BJ (cell line): ENCODE measurements at regions of chr2 and their contacts with region 1.

Region 1: DNA sequence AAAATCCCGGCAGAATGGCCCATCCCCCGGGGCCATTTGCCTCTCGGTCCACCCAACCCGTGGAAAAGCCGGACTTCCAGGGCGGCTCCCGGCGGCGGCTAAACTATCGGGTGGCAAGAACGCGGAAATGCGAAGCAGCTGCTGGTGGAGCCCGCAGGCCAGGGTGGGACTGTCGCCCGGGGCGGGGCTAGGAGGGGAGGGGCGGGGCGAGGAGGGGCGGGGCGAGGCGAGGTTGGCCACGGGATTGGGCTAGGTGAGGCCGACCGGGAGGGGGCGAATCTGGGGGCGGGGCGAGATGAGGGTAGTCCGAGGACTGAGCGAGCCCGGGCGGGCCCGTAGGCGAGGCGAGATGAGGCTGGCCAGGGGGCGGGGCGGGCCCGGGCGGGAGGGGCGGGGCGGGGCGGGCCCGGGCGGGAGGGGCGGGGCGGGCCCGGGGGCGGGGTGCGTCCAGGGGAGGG is 315 bp upstream of the SLC66A3 start:
- DNase-seq: peak; percentile 55
- H3K4me3 ChIP-seq: peak overlapping the region; percentile 27
- H3K27me3 ChIP-seq: peaks cover 4% of the 10 kb centered on the region
- CTCF ChIP-seq: no peak

Region 2: GRCh38 chr2:10931710-10932255 is 223.2 kb before region 1 on chr2:
- CTCF ChIA-PET with region 1: no interaction called
- POLR2A ChIA-PET with region 1: interaction called, 32 read pairs
- DNase-seq: no peak
- H3K4me3 ChIP-seq: no peak overlapping the region
- H3K27me3 ChIP-seq: peaks cover 6% of the 10 kb centered on the region
- CTCF ChIP-seq: no peak

Region 3: DNA sequence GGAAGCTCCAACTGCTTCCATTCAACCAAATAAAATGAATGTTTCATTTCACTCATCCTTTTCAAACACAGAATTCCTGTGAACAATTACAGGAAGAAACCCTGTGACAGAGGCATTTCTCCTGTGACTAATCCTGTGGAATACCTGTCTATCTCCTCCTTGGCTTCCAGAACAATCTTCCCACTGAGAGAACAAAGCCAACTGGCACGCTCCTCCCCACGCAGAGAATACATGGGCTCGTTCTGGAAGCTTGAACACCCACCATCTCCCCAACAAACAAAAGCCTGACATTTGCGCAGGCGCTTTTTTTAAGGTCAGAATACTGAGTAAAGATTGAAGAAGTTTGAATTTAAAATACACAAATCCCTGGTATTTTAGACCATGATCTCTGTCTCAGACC is 104.4 kb before region 1 on chr2:
- CTCF ChIA-PET with region 1: no interaction called
- POLR2A ChIA-PET with region 1: no interaction called
- DNase-seq: no peak
- H3K4me3 ChIP-seq: no peak overlapping the region
- H3K27me3 ChIP-seq: peaks cover 8% of the 10 kb centered on the region
- CTCF ChIP-seq: no peak

Region 4: DNA sequence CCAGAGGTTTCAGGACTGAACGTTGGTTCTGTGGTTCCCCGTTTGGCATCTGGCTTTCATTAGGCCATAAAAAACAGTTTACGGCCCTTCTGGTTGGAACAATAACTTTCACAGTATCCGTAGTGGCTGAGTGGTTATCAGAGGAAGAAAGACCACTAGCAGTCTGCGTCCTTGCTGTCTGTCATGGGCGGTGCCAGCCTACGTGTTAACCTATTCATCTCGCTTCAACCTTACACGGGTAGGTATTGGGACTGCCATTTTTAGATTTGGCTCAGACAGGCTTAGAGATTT is 232.1 kb after region 1 on chr2:
- CTCF ChIA-PET with region 1: no interaction called
- POLR2A ChIA-PET with region 1: interaction called, 17 read pairs
- DNase-seq: peak; percentile 62
- H3K4me3 ChIP-seq: no peak overlapping the region
- H3K27me3 ChIP-seq: no peaks in the 10 kb centered on the region
- CTCF ChIP-seq: no peak

Region 5: GRCh38 chr2:11621410-11621809 is 466.5 kb after region 1 on chr2:
- CTCF ChIA-PET with region 1: no interaction called
- POLR2A ChIA-PET with region 1: no interaction called
- DNase-seq: no peak
- H3K4me3 ChIP-seq: no peak overlapping the region
- H3K27me3 ChIP-seq: no peaks in the 10 kb centered on the region
- CTCF ChIP-seq: no peak